KBM-7 (cell line): ENCODE measurements at regions of chr7 and their contacts with region 1.

Region 1: GRCh38 chr7:123674399-123675180 is 18.9 kb downstream of the LMOD2 start:
- DNase-seq: no peak

Region 2: DNA sequence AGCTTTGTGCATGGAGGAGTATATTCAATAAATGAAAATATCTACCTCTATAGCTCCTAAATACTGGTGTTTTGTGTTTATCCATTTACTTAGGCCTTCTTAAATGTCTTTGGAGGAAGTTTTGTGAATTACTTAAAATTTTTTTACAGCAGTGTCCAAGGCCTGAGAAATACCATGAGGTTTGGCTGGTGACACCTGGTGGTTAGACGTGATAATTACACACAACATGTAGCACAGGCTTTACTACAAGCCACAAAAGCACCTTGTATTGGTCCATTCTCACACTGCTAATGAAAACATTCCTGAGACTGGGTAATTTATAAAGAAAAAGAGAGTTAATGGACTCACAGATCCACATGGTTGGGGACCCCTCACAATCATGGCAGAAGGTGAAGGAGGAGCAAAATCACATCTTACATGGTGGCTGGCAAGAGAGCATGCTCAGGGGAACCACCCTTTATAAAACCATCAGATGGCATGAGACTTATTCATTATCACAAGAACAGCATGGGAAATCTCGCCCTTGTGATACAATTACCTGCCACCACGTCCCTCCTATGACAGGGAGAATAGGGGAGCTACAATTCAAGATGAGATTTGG is 191.0 kb after region 1 on chr7:
- in situ Hi-C with region 1: loop called (anchors 10 kb)
- DNase-seq: peak; percentile 65